ENCODE measurements at regions of chr5 and their contacts with region 1.

Region 1: DNA sequence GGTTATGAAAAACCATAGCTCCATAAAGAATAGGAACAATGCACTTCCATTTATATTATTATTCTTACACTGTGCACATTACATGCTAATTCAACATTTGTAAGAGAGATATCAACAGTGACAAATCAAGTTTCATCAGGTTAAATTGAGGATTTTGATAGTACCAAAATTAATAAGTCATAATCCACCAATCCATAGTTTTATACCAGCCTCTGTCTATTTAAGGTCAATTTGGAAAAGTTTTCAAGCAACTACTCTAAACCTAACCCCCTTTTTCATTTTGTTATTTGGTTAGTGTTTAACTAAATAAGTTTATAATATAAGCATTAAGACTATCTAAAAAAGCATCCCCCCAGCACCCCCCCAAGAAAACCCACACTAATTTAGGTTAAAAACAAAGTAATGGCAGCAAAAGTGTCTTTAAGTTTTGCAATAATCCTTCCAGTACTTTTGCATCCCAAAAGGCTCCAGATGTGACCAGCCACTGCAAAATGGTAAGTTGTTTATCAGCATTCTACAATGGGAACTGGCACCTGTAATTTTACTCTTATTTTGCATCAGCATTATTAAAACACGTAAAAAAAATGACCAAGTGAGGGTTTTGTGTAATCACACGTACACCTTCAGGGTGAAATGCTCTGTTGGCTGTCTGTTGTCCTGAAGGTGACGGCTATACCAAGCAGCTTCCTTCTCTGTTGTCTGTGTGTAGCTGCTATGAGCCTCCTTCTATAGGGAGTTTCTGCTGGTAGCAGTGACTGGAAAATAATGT is 36.8 kb upstream of the SSBP2 start:
- DNase-seq: peak; percentile 53 to 91
- H3K4me3 ChIP-seq: no peak overlapping the region
- H3K27ac ChIP-seq: peak overlapping the region; percentile 66 to 69
- H3K4me1 ChIP-seq: peaks cover 0 to 10% of the 10 kb centered on the region in 2 donors
- H3K27me3 ChIP-seq: no peaks in the 10 kb centered on the region
- CTCF ChIP-seq: peak in 2 of 4 experiments; percentile 3 to 4
- POLR2A ChIP-seq: no peak

Region 2: GRCh38 chr5:81751009-81751835 is 36.4 kb before region 1 on chr5 and contains the start of gene SSBP2:
- intact Hi-C with region 1: loop called (anchors 5 kb)
- DNase-seq: peak; percentile 100
- H3K4me3 ChIP-seq: peak within 1 kb of the TSS; percentile 68 to 87
- H3K27ac ChIP-seq: peak within 1 kb of the TSS; percentile 97 to 99
- H3K4me1 ChIP-seq: peaks cover 0 to 23% of the 10 kb centered on the region in 2 donors
- H3K27me3 ChIP-seq: no peaks in the 10 kb centered on the region
- CTCF ChIP-seq: peak in 1 of 4 experiments; percentile 49
- POLR2A ChIP-seq: peak; percentile 75 to 89
- total RNA-seq, gene SSBP2: 22.0 to 204 (median 90.9) TPM